ENCODE measurements at regions of chr7 and their contacts with region 1.

Region 1: GRCh38 chr7:150481186-150481920 is 30.9 kb downstream of the GIMAP8 start:
- DNase-seq: peak; percentile 63 to 87 (median 69)
- H3K4me3 ChIP-seq: peak overlapping the region in 1 of 2 donors; percentile 37
- H3K4me3 Mint-ChIP-seq: peak overlapping the region; percentile 80 to 90 (median 88)
- H3K27ac ChIP-seq: peak overlapping the region; percentile 71
- H3K27ac Mint-ChIP-seq: peak overlapping the region; percentile 96 to 100 (median 99)
- H3K4me1 ChIP-seq: peaks cover 99% of the 10 kb centered on the region
- H3K4me1 Mint-ChIP-seq: peaks cover 75 to 98% (median 91%) of the 10 kb centered on the region in 4 donors
- H3K27me3 ChIP-seq: no peaks in the 10 kb centered on the region
- H3K27me3 Mint-ChIP-seq: no peaks in the 10 kb centered on the region

Region 2: DNA sequence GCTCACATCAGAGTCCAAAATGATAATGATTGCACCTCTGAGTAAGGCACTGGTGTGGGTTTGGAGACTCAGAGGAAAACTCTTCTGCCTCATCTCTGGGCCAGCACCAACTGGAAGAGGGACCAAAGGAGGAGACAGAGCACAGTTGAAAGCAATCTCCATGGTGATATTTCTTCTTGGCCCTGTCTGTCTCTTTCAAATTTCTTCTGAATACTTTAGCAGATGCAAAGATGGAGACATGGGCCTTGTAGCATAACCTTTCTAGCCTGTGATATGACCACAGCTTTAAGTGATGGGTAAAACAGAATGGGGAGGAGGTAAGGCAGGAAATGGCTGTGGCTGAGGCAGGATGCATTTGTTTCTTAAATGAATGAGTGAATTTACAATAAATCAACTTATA is 21.2 kb after region 1 on chr7:
- CTCF ChIA-PET with region 1: interaction called, 10 read pairs
- POLR2A ChIA-PET with region 1: interaction called, 235 read pairs
- intact Hi-C with region 1: loop called (anchors 2 kb)
- DNase-seq: peak; percentile 56 to 75 (median 67)
- H3K4me3 ChIP-seq: no peak overlapping the region
- H3K4me3 Mint-ChIP-seq: peak overlapping the region; percentile 22 to 86 (median 73)
- H3K27ac ChIP-seq: peak overlapping the region; percentile 51
- H3K27ac Mint-ChIP-seq: peak overlapping the region; percentile 84 to 99 (median 92)
- H3K4me1 ChIP-seq: peaks cover 53% of the 10 kb centered on the region
- H3K4me1 Mint-ChIP-seq: peaks cover 66 to 94% (median 81%) of the 10 kb centered on the region in 4 donors
- H3K27me3 ChIP-seq: no peaks in the 10 kb centered on the region
- H3K27me3 Mint-ChIP-seq: no peaks in the 10 kb centered on the region

Region 3: DNA sequence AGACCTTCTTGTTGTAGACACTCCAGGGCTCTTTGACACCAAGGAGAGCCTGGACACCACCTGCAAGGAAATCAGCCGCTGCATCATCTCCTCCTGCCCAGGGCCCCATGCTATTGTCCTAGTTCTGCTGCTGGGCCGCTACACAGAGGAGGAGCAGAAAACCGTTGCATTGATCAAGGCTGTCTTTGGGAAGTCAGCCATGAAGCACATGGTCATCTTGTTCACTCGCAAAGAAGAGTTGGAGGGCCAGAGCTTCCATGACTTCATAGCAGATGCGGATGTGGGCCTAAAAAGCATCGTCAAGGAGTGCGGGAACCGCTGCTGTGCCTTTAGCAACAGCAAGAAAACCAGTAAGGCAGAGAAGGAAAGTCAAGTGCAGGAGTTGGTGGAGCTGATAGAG is 38.8 kb after region 1 on chr7:
- CTCF ChIA-PET with region 1: interaction called, 6 read pairs
- POLR2A ChIA-PET with region 1: interaction called, 673 read pairs
- intact Hi-C with region 1: loop called (anchors 1 kb)
- DNase-seq: peak in 1 of 5 donors; percentile 34
- H3K4me3 ChIP-seq: peak overlapping the region; percentile 61 to 74
- H3K4me3 Mint-ChIP-seq: peak overlapping the region; percentile 97 to 100 (median 99)
- H3K27ac ChIP-seq: peak overlapping the region; percentile 62
- H3K27ac Mint-ChIP-seq: peak overlapping the region; percentile 81 to 97 (median 92)
- H3K4me1 ChIP-seq: peaks cover 18% of the 10 kb centered on the region
- H3K4me1 Mint-ChIP-seq: peaks cover 21 to 50% (median 33%) of the 10 kb centered on the region in 4 donors
- H3K27me3 ChIP-seq: no peaks in the 10 kb centered on the region
- H3K27me3 Mint-ChIP-seq: no peaks in the 10 kb centered on the region

Region 4: DNA sequence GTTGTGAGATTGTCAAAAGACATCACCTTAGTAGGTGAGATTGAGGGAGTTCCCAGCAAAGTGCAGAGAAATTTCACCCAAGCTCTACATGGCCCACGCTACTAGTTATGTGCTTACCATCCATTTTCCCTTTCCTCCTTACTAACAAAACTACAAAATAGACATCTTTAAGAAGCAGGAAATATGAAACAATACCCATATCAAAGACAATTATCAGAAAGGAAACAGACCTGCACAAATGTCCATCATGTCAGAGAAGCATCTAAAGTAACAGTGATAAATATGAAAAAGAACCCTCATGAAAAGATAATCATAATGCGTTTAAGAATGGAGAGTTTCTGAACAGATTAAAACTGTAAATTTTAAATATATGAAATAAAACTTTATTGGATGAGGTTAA is 114.0 kb after region 1 on chr7:
- CTCF ChIA-PET with region 1: no interaction called
- POLR2A ChIA-PET with region 1: no interaction called
- intact Hi-C with region 1: no loop called
- DNase-seq: no peak
- H3K4me3 ChIP-seq: no peak overlapping the region
- H3K4me3 Mint-ChIP-seq: peak overlapping the region in 4 of 8 donors; percentile 3 to 39 (median 12)
- H3K27ac ChIP-seq: no peak overlapping the region
- H3K27ac Mint-ChIP-seq: peak overlapping the region in 2 of 7 donors; percentile 25 to 31
- H3K4me1 ChIP-seq: peaks cover 22% of the 10 kb centered on the region
- H3K4me1 Mint-ChIP-seq: peaks cover 28 to 72% (median 44%) of the 10 kb centered on the region in 4 donors
- H3K27me3 ChIP-seq: no peaks in the 10 kb centered on the region
- H3K27me3 Mint-ChIP-seq: no peaks in the 10 kb centered on the region

Region 5: DNA sequence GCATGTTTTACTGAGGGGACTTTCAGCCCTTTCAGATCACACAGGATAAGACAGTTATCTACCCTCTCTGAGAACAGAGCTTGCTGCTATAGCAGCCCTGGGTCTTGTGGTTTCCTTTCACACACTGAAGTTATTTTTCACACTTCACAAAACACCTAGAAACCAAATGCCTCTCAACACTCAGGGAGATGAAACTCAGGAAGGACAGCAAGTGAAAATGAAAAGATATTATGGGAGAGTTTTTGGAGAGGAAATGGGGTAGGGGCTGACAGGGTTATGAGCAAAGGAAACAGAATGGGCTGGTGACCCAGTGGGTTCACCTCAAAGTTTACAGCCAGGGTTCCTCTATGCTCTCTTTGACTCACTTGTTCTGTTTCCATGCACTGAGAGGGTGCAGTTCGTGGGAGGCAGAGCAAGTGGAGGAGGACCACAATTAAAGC is 187.1 kb after region 1 on chr7:
- CTCF ChIA-PET with region 1: no interaction called
- POLR2A ChIA-PET with region 1: interaction called, 11 read pairs
- intact Hi-C with region 1: no loop called
- DNase-seq: peak; percentile 80 to 88 (median 85)
- H3K4me3 ChIP-seq: peak overlapping the region; percentile 2 to 26
- H3K4me3 Mint-ChIP-seq: peak overlapping the region; percentile 55 to 84 (median 72)
- H3K27ac ChIP-seq: peak overlapping the region; percentile 68
- H3K27ac Mint-ChIP-seq: peak overlapping the region; percentile 82 to 99 (median 98)
- H3K4me1 ChIP-seq: peaks cover 92% of the 10 kb centered on the region
- H3K4me1 Mint-ChIP-seq: peaks cover 63 to 95% (median 79%) of the 10 kb centered on the region in 4 donors
- H3K27me3 ChIP-seq: no peaks in the 10 kb centered on the region
- H3K27me3 Mint-ChIP-seq: no peaks in the 10 kb centered on the region

Region 6: DNA sequence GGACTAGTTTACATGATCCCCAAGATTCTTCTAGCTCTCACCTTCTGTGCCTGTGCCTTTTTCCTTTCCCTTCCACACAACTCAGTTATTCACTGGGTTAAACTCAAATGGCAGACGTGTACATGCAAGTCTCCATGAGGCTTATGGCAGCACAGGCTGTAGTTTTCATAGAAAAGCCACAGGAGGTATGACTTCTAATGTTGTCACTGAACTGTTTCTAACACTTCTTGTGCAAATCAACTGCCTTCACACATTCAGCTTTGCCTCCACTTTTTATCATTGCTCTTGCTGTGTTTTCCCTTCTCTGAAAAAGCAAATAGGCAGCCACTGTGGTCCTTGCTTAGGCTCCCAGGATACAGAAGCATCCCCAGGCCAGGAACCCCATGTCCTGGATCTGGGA is 250.6 kb after region 1 on chr7:
- CTCF ChIA-PET with region 1: interaction called, 3 read pairs
- POLR2A ChIA-PET with region 1: interaction called, 35 read pairs
- intact Hi-C with region 1: no loop called
- DNase-seq: no peak
- H3K4me3 ChIP-seq: no peak overlapping the region
- H3K4me3 Mint-ChIP-seq: peak overlapping the region; percentile 9 to 95 (median 64)
- H3K27ac ChIP-seq: peak overlapping the region; percentile 6
- H3K27ac Mint-ChIP-seq: peak overlapping the region; percentile 86 to 97 (median 91)
- H3K4me1 ChIP-seq: peaks cover 76% of the 10 kb centered on the region
- H3K4me1 Mint-ChIP-seq: peaks cover 71 to 87% (median 76%) of the 10 kb centered on the region in 4 donors
- H3K27me3 ChIP-seq: no peaks in the 10 kb centered on the region
- H3K27me3 Mint-ChIP-seq: no peaks in the 10 kb centered on the region

Measured in CD4-positive, alpha-beta memory T cell (primary cell).